ENCODE measurements at regions of chr2 and their contacts with region 1.

Region 1: GRCh38 chr2:227862227-227862740 is 9.1 kb upstream of the DAW1 start:
- DNase-seq: peak; percentile 36
- H3K4me3 ChIP-seq: no peak overlapping the region
- H3K27ac ChIP-seq: peak overlapping the region; percentile 69
- H3K4me1 ChIP-seq: peaks cover 33% of the 10 kb centered on the region
- H3K27me3 ChIP-seq: no peaks in the 10 kb centered on the region
- CTCF ChIP-seq: peak; percentile 68 to 71

Region 2: DNA sequence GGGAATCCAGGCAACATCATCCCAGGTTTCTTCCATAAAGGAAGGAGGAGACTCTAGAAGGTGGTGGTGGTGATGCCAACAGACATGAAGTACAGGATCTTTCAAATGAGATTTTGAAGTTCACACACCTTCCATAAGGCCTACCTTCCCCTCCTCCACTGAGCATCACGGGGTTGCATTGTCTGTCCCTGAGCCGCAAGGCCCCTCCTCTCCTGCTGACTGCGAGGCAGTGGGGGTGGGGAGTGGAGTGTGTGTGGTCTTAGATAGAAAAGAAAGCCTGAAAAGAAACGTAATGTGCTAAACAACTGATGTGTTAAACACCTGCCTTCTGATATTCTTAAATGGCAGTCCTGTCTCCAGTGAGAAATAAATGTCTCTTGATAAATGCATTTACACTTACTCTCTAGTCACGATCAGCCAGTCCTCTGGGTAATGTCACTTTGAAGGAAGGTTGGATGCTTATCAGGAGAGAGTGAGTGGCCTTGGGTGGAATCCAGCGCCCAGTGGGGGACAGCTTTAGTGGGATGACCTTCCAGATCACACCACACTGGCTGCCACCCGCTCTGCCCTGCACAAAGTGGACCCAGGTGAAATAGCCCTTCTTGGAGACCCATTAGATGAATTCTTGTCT is 201.2 kb before region 1 on chr2:
- CTCF ChIA-PET with region 1: interaction called, 5 read pairs
- dilution Hi-C with region 1: no loop called
- in situ Hi-C with region 1: no loop called
- intact Hi-C with region 1: loop called (anchors 2 kb)
- DNase-seq: no peak
- H3K4me3 ChIP-seq: no peak overlapping the region
- H3K27ac ChIP-seq: no peak overlapping the region
- H3K4me1 ChIP-seq: no peaks in the 10 kb centered on the region
- H3K27me3 ChIP-seq: no peaks in the 10 kb centered on the region
- CTCF ChIP-seq: no peak

Region 3: DNA sequence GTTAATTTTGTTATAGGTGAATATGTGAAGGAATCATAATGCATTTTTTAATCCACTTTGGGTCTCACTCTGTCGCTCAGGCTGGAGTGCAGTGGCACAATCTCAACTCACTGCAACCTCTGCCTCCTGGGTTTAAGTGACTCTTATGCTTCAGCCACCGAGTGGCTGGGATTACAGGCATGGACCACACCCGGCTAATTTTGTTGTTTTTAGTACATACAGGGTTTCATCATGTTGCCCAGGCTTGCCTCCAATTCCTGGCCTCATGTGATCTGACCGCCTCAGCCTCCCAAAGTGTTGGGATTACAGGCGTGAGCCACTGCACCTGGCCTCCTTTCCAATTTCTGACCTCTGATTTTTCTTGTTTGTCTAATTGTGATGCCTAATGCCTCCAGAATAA is 178.0 kb before region 1 on chr2:
- CTCF ChIA-PET with region 1: no interaction called
- dilution Hi-C with region 1: no loop called
- in situ Hi-C with region 1: no loop called
- intact Hi-C with region 1: no loop called
- DNase-seq: no peak
- H3K4me3 ChIP-seq: no peak overlapping the region
- H3K27ac ChIP-seq: no peak overlapping the region
- H3K4me1 ChIP-seq: no peaks in the 10 kb centered on the region
- H3K27me3 ChIP-seq: no peaks in the 10 kb centered on the region
- CTCF ChIP-seq: no peak